Activated CD4-positive, alpha-beta T cell treated with anti-CD3 and anti-CD28 coated beads, Interleukin-2, amount 10 ng/mL, durations not matched to agents 24 days and 14 days (primary cell): ENCODE measurements at regions of chr9 and their contacts with region 1.

Region 1: GRCh38 chr9:69785757-69786156 is 25.9 kb upstream of the PTAR1 start:
- DNase-seq: no peak
- H3K4me3 Mint-ChIP-seq: no peak overlapping the region
- H3K27ac Mint-ChIP-seq: no peak overlapping the region
- H3K4me1 Mint-ChIP-seq: peaks cover 2% of the 10 kb centered on the region
- H3K27me3 Mint-ChIP-seq: peaks cover 25% of the 10 kb centered on the region

Region 2: GRCh38 chr9:69633716-69634115 is 152.0 kb before region 1 on chr9:
- intact Hi-C with region 1: no loop called
- DNase-seq: no peak
- H3K4me3 Mint-ChIP-seq: no peak overlapping the region
- H3K27ac Mint-ChIP-seq: no peak overlapping the region
- H3K4me1 Mint-ChIP-seq: no peaks in the 10 kb centered on the region
- H3K27me3 Mint-ChIP-seq: peaks cover 19% of the 10 kb centered on the region

Region 3: GRCh38 chr9:69748304-69748703 is 37.5 kb before region 1 on chr9:
- intact Hi-C with region 1: no loop called
- DNase-seq: no peak
- H3K4me3 Mint-ChIP-seq: no peak overlapping the region
- H3K27ac Mint-ChIP-seq: no peak overlapping the region
- H3K4me1 Mint-ChIP-seq: peaks cover 25% of the 10 kb centered on the region
- H3K27me3 Mint-ChIP-seq: no peaks in the 10 kb centered on the region

Region 4: GRCh38 chr9:69822091-69822750 is 36.5 kb after region 1 on chr9:
- intact Hi-C with region 1: loop called (anchors 5 kb)
- DNase-seq: peak; percentile 54
- H3K4me3 Mint-ChIP-seq: no peak overlapping the region
- H3K27ac Mint-ChIP-seq: no peak overlapping the region
- H3K4me1 Mint-ChIP-seq: peaks cover 40% of the 10 kb centered on the region
- H3K27me3 Mint-ChIP-seq: peaks cover 17% of the 10 kb centered on the region

Region 5: GRCh38 chr9:70835323-70835722 is 1049.6 kb after region 1 on chr9:
- intact Hi-C with region 1: no loop called
- DNase-seq: no peak
- H3K4me3 Mint-ChIP-seq: no peak overlapping the region
- H3K27ac Mint-ChIP-seq: no peak overlapping the region
- H3K4me1 Mint-ChIP-seq: no peaks in the 10 kb centered on the region
- H3K27me3 Mint-ChIP-seq: peaks cover 2% of the 10 kb centered on the region